ENCODE measurements at regions of chr6 and their contacts with region 1.

Region 1: GRCh38 chr6:13384966-13385365 is 56.6 kb upstream of the TBC1D7 start:
- DNase-seq: no peak
- H3K4me3 ChIP-seq: no peak overlapping the region
- H3K27ac ChIP-seq: no peak overlapping the region
- H3K4me1 ChIP-seq: no peaks in the 10 kb centered on the region
- H3K27me3 ChIP-seq: no peaks in the 10 kb centered on the region
- CTCF ChIP-seq: no peak
- POLR2A ChIP-seq: no peak

Region 2: DNA sequence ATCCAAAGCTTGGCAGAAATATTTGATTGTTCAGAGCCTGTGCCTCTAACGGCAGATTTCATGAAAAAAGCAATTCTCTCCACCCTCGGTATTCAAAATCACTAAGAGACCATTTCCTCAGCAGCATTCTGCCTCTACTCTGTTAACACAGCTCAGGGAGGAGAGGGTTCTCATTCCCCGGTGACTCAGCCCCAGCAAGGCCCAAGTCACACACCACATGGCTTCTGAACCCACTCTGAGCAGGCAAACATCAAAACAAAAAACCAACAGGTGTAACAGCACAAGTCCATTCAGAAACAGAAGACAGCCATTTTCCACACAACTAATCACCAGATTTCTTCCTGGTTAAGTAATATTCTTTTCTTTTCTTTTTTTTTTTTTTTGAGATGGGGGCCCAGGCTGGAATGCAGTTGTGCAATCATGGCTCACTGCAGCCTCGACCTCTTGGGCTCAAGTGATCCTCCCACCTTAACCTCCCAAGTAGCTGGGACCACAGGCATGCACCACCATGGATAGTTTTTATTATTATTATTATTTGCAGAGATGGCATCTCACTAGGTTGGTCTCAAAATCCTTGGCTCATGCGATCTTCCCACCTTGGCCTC is 47.0 kb after region 1 on chr6:
- intact Hi-C with region 1: no loop called
- DNase-seq: no peak
- H3K4me3 ChIP-seq: no peak overlapping the region
- H3K27ac ChIP-seq: no peak overlapping the region
- H3K4me1 ChIP-seq: peaks cover 0 to 6% of the 10 kb centered on the region in 2 donors
- H3K27me3 ChIP-seq: no peaks in the 10 kb centered on the region
- CTCF ChIP-seq: no peak
- POLR2A ChIP-seq: no peak

Region 3: DNA sequence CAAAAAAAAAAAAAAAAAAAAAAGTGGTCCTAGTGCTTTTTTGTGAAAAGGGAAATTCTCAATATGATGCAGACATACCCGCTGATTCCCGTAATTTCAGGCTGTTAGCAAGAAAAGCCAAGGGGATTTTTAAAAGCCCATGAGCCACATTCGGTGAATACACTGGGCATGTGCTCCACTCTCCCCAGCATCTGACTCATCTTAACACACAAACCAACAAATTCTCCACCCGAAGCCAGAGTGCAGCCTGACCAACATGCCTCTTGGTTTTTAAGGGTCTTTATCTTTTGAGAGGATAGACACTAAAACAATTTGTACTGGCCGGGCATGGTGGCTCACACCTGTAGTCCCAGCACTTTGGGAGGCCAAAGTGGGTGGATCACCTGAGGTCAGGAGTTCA is 687.1 kb after region 1 on chr6:
- intact Hi-C with region 1: loop called (anchors 5 kb)
- DNase-seq: no peak
- H3K4me3 ChIP-seq: no peak overlapping the region
- H3K27ac ChIP-seq: no peak overlapping the region
- H3K4me1 ChIP-seq: no peaks in the 10 kb centered on the region
- H3K27me3 ChIP-seq: no peaks in the 10 kb centered on the region
- CTCF ChIP-seq: no peak
- POLR2A ChIP-seq: no peak